ENCODE measurements at regions of chr4 and their contacts with region 1.

Region 1: GRCh38 chr4:126192506-126192905 is 877.8 kb downstream of the FAT4 start:
- DNase-seq: no peak
- ATAC-seq: no peak
- H3K4me3 ChIP-seq: no peak overlapping the region
- H3K4me3 Mint-ChIP-seq: no peak overlapping the region
- H3K27ac ChIP-seq: no peak overlapping the region
- H3K27ac Mint-ChIP-seq: no peak overlapping the region
- H3K4me1 ChIP-seq: no peaks in the 10 kb centered on the region
- H3K4me1 Mint-ChIP-seq: no peaks in the 10 kb centered on the region
- H3K27me3 ChIP-seq: no peaks in the 10 kb centered on the region
- H3K27me3 Mint-ChIP-seq: no peaks in the 10 kb centered on the region
- CTCF ChIP-seq: no peak

Region 2: GRCh38 chr4:125750828-125751466 is 441.6 kb before region 1 on chr4:
- CTCF ChIA-PET with region 1: no interaction called
- POLR2A ChIA-PET with region 1: no interaction called
- intact Hi-C with region 1: loop called in 1 of 2 experiments (anchors 10 kb)
- DNase-seq: peak in 1 of 9 experiments; percentile 14
- ATAC-seq: no peak
- H3K4me3 ChIP-seq: no peak overlapping the region
- H3K4me3 Mint-ChIP-seq: no peak overlapping the region
- H3K27ac ChIP-seq: no peak overlapping the region
- H3K27ac Mint-ChIP-seq: no peak overlapping the region
- H3K4me1 ChIP-seq: no peaks in the 10 kb centered on the region
- H3K4me1 Mint-ChIP-seq: no peaks in the 10 kb centered on the region
- H3K27me3 ChIP-seq: no peaks in the 10 kb centered on the region
- H3K27me3 Mint-ChIP-seq: no peaks in the 10 kb centered on the region
- CTCF ChIP-seq: no peak

Region 3: GRCh38 chr4:126687655-126688358 is 495.3 kb after region 1 on chr4:
- CTCF ChIA-PET with region 1: no interaction called
- POLR2A ChIA-PET with region 1: no interaction called
- intact Hi-C with region 1: no loop called
- DNase-seq: no peak
- ATAC-seq: no peak
- H3K4me3 ChIP-seq: no peak overlapping the region
- H3K4me3 Mint-ChIP-seq: no peak overlapping the region
- H3K27ac ChIP-seq: no peak overlapping the region
- H3K27ac Mint-ChIP-seq: no peak overlapping the region
- H3K4me1 ChIP-seq: no peaks in the 10 kb centered on the region
- H3K4me1 Mint-ChIP-seq: no peaks in the 10 kb centered on the region
- H3K27me3 ChIP-seq: no peaks in the 10 kb centered on the region
- H3K27me3 Mint-ChIP-seq: no peaks in the 10 kb centered on the region
- CTCF ChIP-seq: no peak

Measured in CD8-positive, alpha-beta T cell (primary cell).